ENCODE measurements at regions of chr11 and their contacts with region 1.

Region 1: DNA sequence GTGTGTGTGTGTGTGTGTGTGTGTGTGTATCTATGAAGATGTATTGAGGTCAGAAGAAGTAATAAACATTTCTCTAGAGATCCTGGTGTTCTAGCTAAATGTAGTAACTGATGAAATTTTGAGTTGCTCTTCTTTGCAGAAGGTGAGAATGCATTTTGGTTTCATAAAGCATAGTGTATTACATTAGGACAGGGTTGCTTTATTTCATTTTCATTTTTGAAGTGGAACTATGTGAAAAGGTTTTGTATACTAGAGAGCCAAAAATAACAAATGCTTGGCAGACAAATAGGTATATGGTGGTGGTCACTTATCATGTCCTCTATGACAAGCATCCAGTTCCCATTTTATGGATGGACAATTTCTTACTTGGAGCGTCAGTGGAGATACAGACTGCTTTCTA is 99.0 kb downstream of the CASP12 start:
- DNase-seq: peak in 2 of 9 donors; percentile 4 to 9
- ATAC-seq: peak; percentile 31
- H3K4me3 ChIP-seq: peak overlapping the region; percentile 33
- H3K4me3 Mint-ChIP-seq: peak overlapping the region; percentile 63 to 90 (median 85)
- H3K27ac ChIP-seq: no peak overlapping the region
- H3K27ac Mint-ChIP-seq: peak overlapping the region; percentile 69 to 95 (median 85)
- H3K4me1 ChIP-seq: peaks cover 0 to 10% of the 10 kb centered on the region in 2 donors
- H3K4me1 Mint-ChIP-seq: peaks cover 10 to 53% (median 40%) of the 10 kb centered on the region in 7 donors
- H3K27me3 ChIP-seq: no peaks in the 10 kb centered on the region
- H3K27me3 Mint-ChIP-seq: no peaks in the 10 kb centered on the region

Region 2: DNA sequence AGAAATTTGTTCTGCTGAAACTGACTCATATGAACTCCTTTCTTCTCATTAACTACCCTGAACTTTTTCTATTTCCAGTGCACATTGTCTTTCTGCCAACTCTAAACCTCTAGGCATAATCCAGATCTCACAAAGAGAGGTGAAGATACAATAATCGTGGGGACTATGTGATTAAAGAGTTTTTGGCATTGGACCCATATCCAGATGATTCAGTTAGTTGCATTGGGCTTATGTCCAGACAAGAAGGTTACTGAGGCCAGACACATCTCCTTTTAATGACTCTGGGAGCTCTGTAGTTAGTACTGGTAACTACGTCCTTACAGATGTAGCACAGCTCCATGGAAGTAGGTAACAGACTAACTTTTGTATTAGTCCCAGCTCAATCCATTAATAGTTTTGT is 174.0 kb before region 1 on chr11:
- CTCF ChIA-PET with region 1: no interaction called
- POLR2A ChIA-PET with region 1: no interaction called
- intact Hi-C with region 1: loop called in 1 of 2 experiments (anchors 5 kb)
- DNase-seq: no peak
- ATAC-seq: no peak
- H3K4me3 ChIP-seq: no peak overlapping the region
- H3K4me3 Mint-ChIP-seq: no peak overlapping the region
- H3K27ac ChIP-seq: no peak overlapping the region
- H3K27ac Mint-ChIP-seq: no peak overlapping the region
- H3K4me1 ChIP-seq: no peaks in the 10 kb centered on the region
- H3K4me1 Mint-ChIP-seq: peaks cover 0 to 10% (median 3%) of the 10 kb centered on the region in 7 donors
- H3K27me3 ChIP-seq: no peaks in the 10 kb centered on the region
- H3K27me3 Mint-ChIP-seq: no peaks in the 10 kb centered on the region

Region 3: GRCh38 chr11:104738918-104739317 is 60.3 kb before region 1 on chr11:
- CTCF ChIA-PET with region 1: no interaction called
- POLR2A ChIA-PET with region 1: no interaction called
- intact Hi-C with region 1: no loop called
- DNase-seq: no peak
- ATAC-seq: no peak
- H3K4me3 ChIP-seq: no peak overlapping the region
- H3K4me3 Mint-ChIP-seq: no peak overlapping the region
- H3K27ac ChIP-seq: no peak overlapping the region
- H3K27ac Mint-ChIP-seq: no peak overlapping the region
- H3K4me1 ChIP-seq: no peaks in the 10 kb centered on the region
- H3K4me1 Mint-ChIP-seq: peaks cover 4 to 18% (median 7%) of the 10 kb centered on the region in 7 donors
- H3K27me3 ChIP-seq: no peaks in the 10 kb centered on the region
- H3K27me3 Mint-ChIP-seq: no peaks in the 10 kb centered on the region

Region 4: DNA sequence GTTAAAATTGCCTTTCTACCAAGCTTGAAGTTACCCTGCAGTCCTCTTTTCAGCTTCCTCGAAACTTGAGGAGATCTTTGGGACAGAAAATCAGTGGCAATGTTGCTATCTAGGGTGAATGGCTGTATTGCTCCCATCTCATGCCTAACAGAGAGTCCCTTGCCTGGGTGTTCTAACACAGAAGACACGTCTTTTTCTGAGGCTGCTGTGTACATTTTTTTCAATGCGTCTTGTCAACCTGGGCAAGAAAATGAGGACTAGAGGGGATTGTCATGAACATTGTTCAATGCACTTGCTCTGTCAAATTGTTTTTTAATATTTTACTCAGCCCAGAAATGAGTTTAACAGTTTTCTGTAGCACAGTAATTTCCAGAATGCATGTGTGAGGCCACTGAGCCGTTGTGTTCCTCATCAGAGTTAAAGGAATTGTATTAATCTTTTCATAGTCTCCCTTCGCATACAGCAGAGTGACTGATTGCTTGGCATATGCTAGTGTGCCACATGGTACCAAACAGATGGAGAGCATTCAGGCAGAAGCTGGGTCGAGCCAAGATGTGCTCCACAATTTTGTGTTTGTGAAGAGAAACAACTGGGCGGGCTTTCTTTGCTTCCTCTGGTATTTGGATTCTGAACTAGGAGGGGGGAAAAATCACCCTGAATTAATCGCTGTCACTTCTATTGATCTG is 13.0 kb after region 1 on chr11:
- CTCF ChIA-PET with region 1: interaction called, 3 read pairs
- POLR2A ChIA-PET with region 1: interaction called, 3 read pairs
- intact Hi-C with region 1: loop called in 1 of 2 experiments (anchors 1 kb)
- DNase-seq: no peak
- ATAC-seq: no peak
- H3K4me3 ChIP-seq: no peak overlapping the region
- H3K4me3 Mint-ChIP-seq: no peak overlapping the region
- H3K27ac ChIP-seq: no peak overlapping the region
- H3K27ac Mint-ChIP-seq: peak overlapping the region in 1 of 9 donors; percentile 9
- H3K4me1 ChIP-seq: no peaks in the 10 kb centered on the region
- H3K4me1 Mint-ChIP-seq: peaks cover 0 to 2% (median 0%) of the 10 kb centered on the region in 7 donors
- H3K27me3 ChIP-seq: no peaks in the 10 kb centered on the region
- H3K27me3 Mint-ChIP-seq: no peaks in the 10 kb centered on the region

Region 5: GRCh38 chr11:104918113-104918824 is 119.0 kb after region 1 on chr11:
- CTCF ChIA-PET with region 1: no interaction called
- POLR2A ChIA-PET with region 1: no interaction called
- intact Hi-C with region 1: loop called (anchors 1 to 5 kb)
- DNase-seq: peak in 4 of 9 donors; percentile 14 to 46 (median 32)
- ATAC-seq: peak; percentile 82
- H3K4me3 ChIP-seq: peak overlapping the region; percentile 60
- H3K4me3 Mint-ChIP-seq: peak overlapping the region; percentile 76 to 99 (median 91)
- H3K27ac ChIP-seq: peak overlapping the region; percentile 65
- H3K27ac Mint-ChIP-seq: peak overlapping the region; percentile 58 to 97 (median 92)
- H3K4me1 ChIP-seq: peaks cover 12 to 34% of the 10 kb centered on the region in 2 donors
- H3K4me1 Mint-ChIP-seq: peaks cover 30 to 72% (median 55%) of the 10 kb centered on the region in 7 donors
- H3K27me3 ChIP-seq: no peaks in the 10 kb centered on the region
- H3K27me3 Mint-ChIP-seq: peaks cover 0 to 3% (median 0%) of the 10 kb centered on the region in 5 donors

Region 6: GRCh38 chr11:106021967-106022794 is 1222.9 kb after region 1 on chr11 and contains the start of gene MSANTD4:
- CTCF ChIA-PET with region 1: no interaction called
- POLR2A ChIA-PET with region 1: no interaction called
- intact Hi-C with region 1: loop called in 1 of 2 experiments (anchors 10 kb)
- DNase-seq: peak; percentile 89 to 97 (median 95)
- ATAC-seq: peak; percentile 98
- H3K4me3 ChIP-seq: peak within 1 kb of the TSS; percentile 82
- H3K4me3 Mint-ChIP-seq: peak within 1 kb of the TSS; percentile 91 to 99 (median 94)
- H3K27ac ChIP-seq: peak within 1 kb of the TSS; percentile 66
- H3K27ac Mint-ChIP-seq: peak within 1 kb of the TSS; percentile 82 to 96 (median 89)
- H3K4me1 ChIP-seq: peaks cover 10 to 20% of the 10 kb centered on the region in 2 donors
- H3K4me1 Mint-ChIP-seq: peaks cover 34 to 60% (median 49%) of the 10 kb centered on the region in 7 donors
- H3K27me3 ChIP-seq: no peaks in the 10 kb centered on the region
- H3K27me3 Mint-ChIP-seq: peaks cover 0 to 13% (median 6%) of the 10 kb centered on the region in 5 donors
- total RNA-seq, gene MSANTD4: 4.7 to 18.7 (median 15.3) TPM